CD4-positive, alpha-beta memory T cell (primary cell): ENCODE measurements at regions of chr1 and their contacts with region 1.

Region 1: GRCh38 chr1:23496490-23497181 is 12.7 kb upstream of the ASAP3 start:
- DNase-seq: no peak
- H3K4me3 ChIP-seq: no peak overlapping the region
- H3K4me3 Mint-ChIP-seq: no peak overlapping the region
- H3K27ac ChIP-seq: no peak overlapping the region
- H3K27ac Mint-ChIP-seq: no peak overlapping the region
- H3K4me1 ChIP-seq: peaks cover 4% of the 10 kb centered on the region
- H3K4me1 Mint-ChIP-seq: peaks cover 0 to 9% (median 5%) of the 10 kb centered on the region in 4 donors
- H3K27me3 ChIP-seq: no peaks in the 10 kb centered on the region
- H3K27me3 Mint-ChIP-seq: no peaks in the 10 kb centered on the region

Region 2: DNA sequence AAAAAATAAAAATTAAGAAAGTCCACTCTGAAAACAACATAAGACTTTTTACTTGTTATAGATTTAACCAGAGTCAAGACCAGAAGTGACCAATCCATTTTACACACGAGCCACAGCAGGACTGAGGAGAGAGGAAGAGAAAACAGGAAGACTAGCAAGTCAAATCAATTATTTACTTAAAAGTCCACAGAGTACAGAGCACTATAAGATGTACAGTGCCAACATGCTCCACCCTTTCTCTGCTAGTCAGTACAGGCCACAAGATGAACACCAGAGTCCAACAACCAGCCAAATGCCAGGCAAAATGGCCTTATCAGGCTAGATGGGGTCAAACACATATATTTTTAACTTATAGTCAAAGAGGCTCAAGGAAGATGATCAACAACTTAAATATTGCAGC is 347.5 kb before region 1 on chr1:
- CTCF ChIA-PET with region 1: no interaction called
- POLR2A ChIA-PET with region 1: no interaction called
- intact Hi-C with region 1: no loop called
- DNase-seq: no peak
- H3K4me3 ChIP-seq: no peak overlapping the region
- H3K4me3 Mint-ChIP-seq: peak overlapping the region in 2 of 8 donors; percentile 15 to 24
- H3K27ac ChIP-seq: no peak overlapping the region
- H3K27ac Mint-ChIP-seq: peak overlapping the region in 4 of 7 donors; percentile 14 to 76 (median 22)
- H3K4me1 ChIP-seq: peaks cover 22% of the 10 kb centered on the region
- H3K4me1 Mint-ChIP-seq: peaks cover 28 to 47% (median 40%) of the 10 kb centered on the region in 4 donors
- H3K27me3 ChIP-seq: no peaks in the 10 kb centered on the region
- H3K27me3 Mint-ChIP-seq: no peaks in the 10 kb centered on the region

Region 3: DNA sequence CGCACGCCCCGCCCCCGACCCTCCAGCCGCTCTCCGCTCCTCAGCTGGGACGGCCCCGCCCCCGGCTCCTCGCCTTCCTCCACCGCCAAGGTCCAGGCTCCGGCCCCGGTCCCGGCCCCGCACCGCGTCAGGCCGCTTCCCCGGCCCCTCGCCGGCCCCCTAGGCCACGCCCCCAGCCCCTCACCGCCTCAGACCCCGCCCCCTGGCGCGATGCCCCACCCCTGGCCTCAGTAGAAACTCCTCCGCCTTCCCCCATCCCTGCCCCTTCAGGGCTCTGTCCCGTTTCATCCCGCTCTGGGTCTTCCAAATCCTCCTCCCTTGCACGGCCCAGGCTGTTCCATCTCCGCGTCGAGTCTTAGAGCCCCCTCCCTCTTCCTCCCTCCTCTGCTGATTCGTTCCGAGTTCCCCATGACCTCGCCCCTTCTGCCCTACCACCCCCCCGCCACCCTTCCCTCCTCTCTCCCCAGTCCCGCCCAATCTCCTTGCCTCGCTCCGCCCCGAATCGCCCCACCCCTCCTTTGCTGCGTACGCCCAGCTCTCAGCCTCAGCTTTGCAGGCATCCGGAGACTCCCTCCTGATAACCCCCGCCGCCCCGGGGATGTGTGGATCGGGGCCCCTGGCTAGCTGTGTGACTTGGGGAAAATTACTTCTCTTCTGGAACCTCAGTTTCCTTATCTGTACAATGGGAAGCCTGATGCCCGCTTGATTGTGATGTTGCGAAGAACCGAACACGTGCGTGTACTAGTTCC is 12.2 kb before region 1 on chr1:
- CTCF ChIA-PET with region 1: interaction called, 58 read pairs
- POLR2A ChIA-PET with region 1: interaction called, 16 read pairs
- intact Hi-C with region 1: no loop called
- DNase-seq: peak; percentile 88 to 95 (median 92)
- H3K4me3 ChIP-seq: peak overlapping the region in 1 of 2 donors; percentile 64
- H3K4me3 Mint-ChIP-seq: peak overlapping the region; percentile 87 to 94 (median 89)
- H3K27ac ChIP-seq: peak overlapping the region; percentile 6
- H3K27ac Mint-ChIP-seq: peak overlapping the region in 6 of 7 donors; percentile 79 to 95 (median 88)
- H3K4me1 ChIP-seq: peaks cover 15% of the 10 kb centered on the region
- H3K4me1 Mint-ChIP-seq: peaks cover 11 to 20% (median 16%) of the 10 kb centered on the region in 4 donors
- H3K27me3 ChIP-seq: no peaks in the 10 kb centered on the region
- H3K27me3 Mint-ChIP-seq: peaks cover 3 to 6% of the 10 kb centered on the region in 2 donors

Region 4: GRCh38 chr1:23507507-23507906 is 10.9 kb after region 1 on chr1:
- CTCF ChIA-PET with region 1: interaction called, 43 read pairs
- POLR2A ChIA-PET with region 1: interaction called, 6 read pairs
- intact Hi-C with region 1: no loop called
- DNase-seq: no peak
- H3K4me3 ChIP-seq: no peak overlapping the region
- H3K4me3 Mint-ChIP-seq: no peak overlapping the region
- H3K27ac ChIP-seq: no peak overlapping the region
- H3K27ac Mint-ChIP-seq: peak overlapping the region in 3 of 7 donors; percentile 47 to 61 (median 48)
- H3K4me1 ChIP-seq: no peaks in the 10 kb centered on the region
- H3K4me1 Mint-ChIP-seq: peaks cover 0 to 2% (median 0%) of the 10 kb centered on the region in 4 donors
- H3K27me3 ChIP-seq: no peaks in the 10 kb centered on the region
- H3K27me3 Mint-ChIP-seq: no peaks in the 10 kb centered on the region

Region 5: GRCh38 chr1:23514111-23514679 is 17.6 kb after region 1 on chr1:
- CTCF ChIA-PET with region 1: interaction called, 924 read pairs
- POLR2A ChIA-PET with region 1: interaction called, 3 read pairs
- intact Hi-C with region 1: no loop called
- DNase-seq: no peak
- H3K4me3 ChIP-seq: no peak overlapping the region
- H3K4me3 Mint-ChIP-seq: no peak overlapping the region
- H3K27ac ChIP-seq: no peak overlapping the region
- H3K27ac Mint-ChIP-seq: peak overlapping the region in 3 of 7 donors; percentile 31 to 76 (median 46)
- H3K4me1 ChIP-seq: no peaks in the 10 kb centered on the region
- H3K4me1 Mint-ChIP-seq: peaks cover 0 to 5% (median 2%) of the 10 kb centered on the region in 4 donors
- H3K27me3 ChIP-seq: no peaks in the 10 kb centered on the region
- H3K27me3 Mint-ChIP-seq: no peaks in the 10 kb centered on the region

Region 6: GRCh38 chr1:23524716-23525401 is 28.2 kb after region 1 on chr1:
- CTCF ChIA-PET with region 1: interaction called, 924 read pairs
- POLR2A ChIA-PET with region 1: interaction called, 135 read pairs
- intact Hi-C with region 1: loop called (anchors 2 kb)
- DNase-seq: peak; percentile 26 to 59 (median 36)
- H3K4me3 ChIP-seq: peak overlapping the region; percentile 5 to 44
- H3K4me3 Mint-ChIP-seq: peak overlapping the region; percentile 59 to 93 (median 74)
- H3K27ac ChIP-seq: peak overlapping the region; percentile 60
- H3K27ac Mint-ChIP-seq: peak overlapping the region; percentile 82 to 97 (median 93)
- H3K4me1 ChIP-seq: peaks cover 69% of the 10 kb centered on the region
- H3K4me1 Mint-ChIP-seq: peaks cover 52 to 83% (median 75%) of the 10 kb centered on the region in 4 donors
- H3K27me3 ChIP-seq: no peaks in the 10 kb centered on the region
- H3K27me3 Mint-ChIP-seq: no peaks in the 10 kb centered on the region

Region 7: GRCh38 chr1:23530747-23531561 is 34.3 kb after region 1 on chr1 and contains the start of gene E2F2:
- CTCF ChIA-PET with region 1: interaction called, 924 read pairs
- POLR2A ChIA-PET with region 1: interaction called, 135 read pairs
- intact Hi-C with region 1: loop called (anchors 2 kb)
- DNase-seq: peak; percentile 78 to 86 (median 82)
- H3K4me3 ChIP-seq: peak within 1 kb of the TSS; percentile 40 to 64
- H3K4me3 Mint-ChIP-seq: peak within 1 kb of the TSS; percentile 90 to 96 (median 92)
- H3K27ac ChIP-seq: peak within 1 kb of the TSS; percentile 60
- H3K27ac Mint-ChIP-seq: peak within 1 kb of the TSS; percentile 86 to 97 (median 94)
- H3K4me1 ChIP-seq: peaks cover 82% of the 10 kb centered on the region
- H3K4me1 Mint-ChIP-seq: peaks cover 58 to 90% (median 80%) of the 10 kb centered on the region in 4 donors
- H3K27me3 ChIP-seq: no peaks in the 10 kb centered on the region
- H3K27me3 Mint-ChIP-seq: no peaks in the 10 kb centered on the region
- total RNA-seq, gene E2F2: 1.1 to 1.2 TPM

Region 8: GRCh38 chr1:23548704-23549143 is 52.1 kb after region 1 on chr1:
- CTCF ChIA-PET with region 1: interaction called, 924 read pairs
- POLR2A ChIA-PET with region 1: interaction called, 4 read pairs
- intact Hi-C with region 1: no loop called
- DNase-seq: no peak
- H3K4me3 ChIP-seq: no peak overlapping the region
- H3K4me3 Mint-ChIP-seq: no peak overlapping the region
- H3K27ac ChIP-seq: no peak overlapping the region
- H3K27ac Mint-ChIP-seq: peak overlapping the region in 2 of 7 donors; percentile 41 to 42
- H3K4me1 ChIP-seq: peaks cover 15% of the 10 kb centered on the region
- H3K4me1 Mint-ChIP-seq: peaks cover 6 to 22% (median 11%) of the 10 kb centered on the region in 4 donors
- H3K27me3 ChIP-seq: no peaks in the 10 kb centered on the region
- H3K27me3 Mint-ChIP-seq: no peaks in the 10 kb centered on the region

Region 9: DNA sequence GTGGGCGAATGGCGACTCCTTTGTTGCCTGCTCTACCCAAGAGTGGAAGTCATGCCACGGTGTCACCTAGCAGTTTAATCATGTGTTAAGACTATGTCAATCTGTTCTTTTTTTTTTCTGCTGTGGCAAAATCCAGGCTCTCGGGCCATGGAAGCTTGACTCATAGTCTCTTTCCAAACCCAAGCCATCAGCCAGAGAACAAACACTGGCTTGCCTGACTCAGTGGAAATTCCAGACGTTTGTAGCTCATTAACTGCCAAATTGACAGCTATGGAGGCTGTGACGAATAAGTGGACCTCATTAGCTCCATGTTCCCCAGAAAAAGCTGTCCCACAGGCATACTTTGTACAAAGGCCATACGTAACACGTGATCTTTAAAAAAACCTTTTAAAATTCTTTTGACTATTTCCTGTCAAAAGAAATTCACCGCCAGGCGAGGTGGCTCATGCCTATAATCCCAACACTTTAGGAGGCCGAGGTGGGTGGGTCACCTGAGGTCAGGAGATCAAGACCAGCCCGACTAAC is 455.0 kb after region 1 on chr1:
- CTCF ChIA-PET with region 1: no interaction called
- POLR2A ChIA-PET with region 1: no interaction called
- intact Hi-C with region 1: no loop called
- DNase-seq: no peak
- H3K4me3 ChIP-seq: no peak overlapping the region
- H3K4me3 Mint-ChIP-seq: no peak overlapping the region
- H3K27ac ChIP-seq: no peak overlapping the region
- H3K27ac Mint-ChIP-seq: no peak overlapping the region
- H3K4me1 ChIP-seq: peaks cover 8% of the 10 kb centered on the region
- H3K4me1 Mint-ChIP-seq: peaks cover 6 to 17% (median 7%) of the 10 kb centered on the region in 4 donors
- H3K27me3 ChIP-seq: no peaks in the 10 kb centered on the region
- H3K27me3 Mint-ChIP-seq: peaks cover under 1 to 6% of the 10 kb centered on the region in 2 donors